Naive thymus-derived CD8-positive, alpha-beta T cell (primary cell): ENCODE measurements at regions of chr1 and their contacts with region 1.

Region 1: GRCh38 chr1:1122078-1122811 is 6.4 kb upstream of the C1orf159 start:
- DNase-seq: peak; percentile 69 to 91 (median 82)
- ATAC-seq: peak; percentile 98 to 99
- H3K4me3 Mint-ChIP-seq: peak overlapping the region in 5 of 10 donors; percentile 13 to 77 (median 38)
- H3K27ac Mint-ChIP-seq: no peak overlapping the region
- H3K4me1 Mint-ChIP-seq: peaks cover 0 to 20% (median 8%) of the 10 kb centered on the region in 4 donors
- H3K27me3 Mint-ChIP-seq: peaks cover 0 to 3% (median 0%) of the 10 kb centered on the region in 5 donors

Region 2: DNA sequence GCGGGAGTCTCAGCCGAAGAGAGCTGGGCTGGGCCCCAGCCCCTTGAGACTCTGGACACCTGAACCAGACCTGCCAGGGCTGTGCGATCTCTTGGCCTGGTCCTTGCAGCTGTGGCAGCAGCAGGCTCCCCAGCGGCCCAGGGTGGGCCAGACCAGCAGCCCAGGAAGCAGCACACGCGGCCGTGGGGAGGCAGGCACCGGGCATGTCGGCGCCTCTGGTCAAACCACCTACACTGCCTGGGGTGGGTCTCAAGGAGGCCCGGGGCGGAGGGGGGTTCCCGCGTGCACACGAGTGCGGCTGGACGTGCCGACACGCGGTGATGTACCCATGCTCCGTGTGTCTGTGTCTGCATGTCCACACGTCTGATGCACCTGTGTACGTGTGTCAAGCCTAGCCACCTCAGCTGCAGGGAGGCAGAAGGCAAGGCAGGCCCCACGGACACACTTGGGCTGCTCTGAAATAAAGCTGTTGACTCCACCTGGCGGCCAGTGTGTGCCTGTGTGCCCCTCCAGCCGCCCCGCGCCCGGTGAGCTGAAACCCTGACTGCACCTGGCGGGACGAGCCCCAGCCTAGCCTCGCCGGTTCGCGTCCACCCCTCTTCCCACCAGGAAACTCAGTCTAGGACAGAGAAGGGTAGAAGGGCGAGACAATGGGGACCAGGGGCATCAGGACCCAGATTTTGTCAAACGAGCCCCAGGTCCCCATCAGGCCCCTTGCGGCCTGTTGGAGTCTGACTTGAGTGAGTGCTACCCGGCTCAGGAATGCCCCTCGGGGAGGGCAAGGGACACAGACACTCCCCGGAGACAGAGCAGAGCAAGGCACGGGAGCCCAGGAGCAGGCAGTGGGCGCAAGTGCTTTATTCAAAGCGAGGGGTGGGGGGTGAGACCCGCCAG is 169.6 kb after region 1 on chr1:
- POLR2A ChIA-PET with region 1: interaction called, 15 read pairs
- DNase-seq: peak; percentile 40 to 84 (median 64)
- ATAC-seq: peak; percentile 90 to 91
- H3K4me3 Mint-ChIP-seq: no peak overlapping the region
- H3K27ac Mint-ChIP-seq: peak overlapping the region in 2 of 10 donors; percentile 21 to 56
- H3K4me1 Mint-ChIP-seq: peaks cover 2 to 12% (median 6%) of the 10 kb centered on the region in 4 donors
- H3K27me3 Mint-ChIP-seq: peaks cover 0 to 9% (median 0%) of the 10 kb centered on the region in 5 donors